Cardiac septum (tissue), 1 donor: ENCODE measurements at regions of chr10 and their contacts with region 1.

Region 1: DNA sequence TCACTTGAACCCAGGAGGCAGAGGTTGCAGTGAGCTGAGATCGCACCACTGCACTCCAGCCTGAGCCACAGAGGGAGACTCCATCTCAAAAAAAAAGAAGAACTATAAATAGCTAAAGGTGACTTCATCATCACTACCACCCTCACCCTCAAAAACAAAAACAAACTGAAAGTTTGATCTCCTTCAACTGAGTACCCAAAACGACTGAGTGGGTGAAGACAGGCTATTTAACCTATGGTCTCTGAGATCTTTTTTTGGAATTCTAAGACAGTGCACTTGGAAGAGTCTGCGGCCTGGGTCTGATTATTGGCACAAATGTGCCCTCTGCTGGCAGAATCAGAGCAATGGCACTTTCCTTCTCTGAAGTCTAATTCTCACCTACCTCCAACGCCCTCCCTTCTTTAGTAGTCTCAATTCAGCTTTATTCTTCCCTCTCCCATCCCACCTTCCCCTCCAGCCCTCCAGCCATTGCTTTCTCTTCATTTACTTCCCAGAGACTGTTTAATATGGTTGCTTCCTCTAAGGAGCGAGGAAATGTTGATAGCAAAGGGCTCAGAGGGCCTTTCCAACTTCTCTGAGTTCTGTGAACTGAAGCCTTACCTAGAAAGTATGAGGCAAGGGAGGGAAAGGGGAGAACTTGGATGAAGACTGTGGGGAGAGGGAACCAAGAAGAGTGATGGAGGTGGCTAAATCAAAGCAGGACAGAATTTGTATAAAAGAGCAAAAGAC is 2.9 kb upstream of the MYOZ1 start:
- DNase-seq: no peak

Region 2: GRCh38 chr10:73529089-73529832 is 114.9 kb before region 1 on chr10:
- intact Hi-C with region 1: loop called (anchors 1 kb)
- DNase-seq: no peak

Region 3: DNA sequence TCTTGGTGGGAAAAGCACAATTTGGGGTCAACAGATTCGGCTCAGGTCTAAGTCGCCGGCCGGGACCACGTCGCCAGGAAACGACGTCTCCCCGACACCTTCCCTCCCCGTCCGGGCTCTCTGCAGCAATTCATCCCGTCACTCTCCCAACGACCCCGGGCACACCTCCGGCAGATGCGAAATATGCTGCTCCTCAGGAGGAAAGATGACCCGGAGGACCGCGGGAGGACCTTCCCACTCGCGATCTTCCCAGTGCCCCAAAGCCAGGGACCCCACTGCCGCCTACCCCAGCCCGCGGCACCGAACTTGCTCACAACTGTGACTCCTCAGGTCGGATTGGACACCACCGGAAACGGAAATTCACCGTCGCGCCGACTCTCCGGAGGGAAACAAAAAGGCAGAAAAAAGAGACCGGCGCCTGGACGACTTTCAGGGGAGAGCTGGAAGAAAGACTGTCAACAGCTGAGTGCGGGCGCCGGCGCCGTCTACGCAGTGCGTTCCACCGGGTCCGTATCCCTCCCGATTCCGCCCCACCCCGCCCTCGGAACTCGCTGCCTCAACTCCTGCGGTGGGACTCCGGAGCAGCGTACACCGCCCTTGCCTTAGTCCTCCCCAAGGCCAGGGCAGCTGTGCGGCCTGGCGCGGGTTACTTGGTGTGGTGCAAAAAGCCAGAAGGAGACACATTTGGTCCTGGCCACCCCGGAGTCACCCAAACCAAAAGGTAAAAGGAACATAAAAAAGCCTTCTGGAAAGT is 86.2 kb after region 1 on chr10:
- intact Hi-C with region 1: loop called (anchors 5 kb)
- DNase-seq: peak; percentile 97